ENCODE measurements at regions of chr10 and their contacts with region 1.

Region 1: GRCh38 chr10:102334101-102334500 is 61.4 kb upstream of the NFKB2 start:
- DNase-seq: peak; percentile 42 to 51
- ATAC-seq: peak; percentile 61 to 93 (median 90)
- H3K4me3 ChIP-seq: no peak overlapping the region
- H3K27ac ChIP-seq: peak overlapping the region in 9 of 10 donors; percentile 53 to 79 (median 71)
- H3K4me1 ChIP-seq: peaks cover 0 to 53% (median 33%) of the 10 kb centered on the region in 9 donors
- H3K27me3 ChIP-seq: no peaks in the 10 kb centered on the region
- CTCF ChIP-seq: no peak

Region 2: GRCh38 chr10:102245101-102245931 is 88.8 kb before region 1 on chr10 and contains the start of gene GBF1:
- intact Hi-C with region 1: loop called in 1 of 10 experiments (anchors 5 kb)
- DNase-seq: peak; percentile 88 to 95
- ATAC-seq: peak; percentile 91 to 95 (median 93)
- H3K4me3 ChIP-seq: peak within 1 kb of the TSS; percentile 71 to 97 (median 82)
- H3K27ac ChIP-seq: peak within 1 kb of the TSS; percentile 46 to 95 (median 89)
- H3K4me1 ChIP-seq: peaks cover 7 to 73% (median 60%) of the 10 kb centered on the region in 9 donors
- H3K27me3 ChIP-seq: peaks cover 0 to 23% (median 0%) of the 10 kb centered on the region in 7 donors
- CTCF ChIP-seq: no peak
- total RNA-seq, gene GBF1: 43.6 to 60.5 (median 50.7) TPM

Region 3: DNA sequence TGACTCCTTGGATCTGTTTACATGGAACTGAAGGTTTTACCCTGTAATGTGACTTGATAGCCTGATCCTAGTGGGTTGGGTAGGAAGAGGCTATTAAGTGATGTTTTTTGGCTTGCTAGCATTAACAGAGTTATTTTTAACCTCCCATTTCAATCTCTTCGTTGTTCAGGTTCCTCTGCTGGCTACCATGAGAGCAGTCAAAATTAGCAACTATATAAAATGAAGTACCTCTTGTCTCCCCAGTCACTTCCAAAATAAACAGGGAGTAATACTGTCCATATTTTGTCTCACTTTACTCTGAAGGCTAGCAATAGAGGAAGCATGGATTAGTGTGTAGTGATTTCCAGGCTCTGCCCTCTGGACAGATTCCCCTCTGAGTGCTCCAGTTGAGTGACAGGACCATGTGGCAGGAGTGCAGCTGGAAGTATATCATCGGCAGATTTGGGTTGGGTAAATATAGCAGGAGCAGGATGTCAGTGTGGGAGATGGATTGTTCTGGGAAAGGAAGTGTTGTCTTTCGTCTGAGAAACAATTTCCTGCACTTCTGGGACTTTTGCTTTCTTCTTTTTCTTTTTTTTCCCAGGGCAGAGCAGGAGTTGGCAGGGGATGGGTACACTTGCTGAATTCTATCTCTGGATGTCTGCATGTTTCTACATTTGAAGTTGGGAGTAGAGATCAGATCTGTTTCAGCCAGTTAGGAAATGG is 53.6 kb before region 1 on chr10:
- intact Hi-C with region 1: loop called in 4 of 10 experiments (anchors 1 to 10 kb)
- DNase-seq: peak in 1 of 2 donors; percentile 71
- ATAC-seq: peak; percentile 88 to 96 (median 93)
- H3K4me3 ChIP-seq: peak overlapping the region in 9 of 10 donors; percentile 4 to 42 (median 28)
- H3K27ac ChIP-seq: peak overlapping the region; percentile 46 to 88 (median 82)
- H3K4me1 ChIP-seq: peaks cover 8 to 75% (median 57%) of the 10 kb centered on the region in 9 donors
- H3K27me3 ChIP-seq: no peaks in the 10 kb centered on the region
- CTCF ChIP-seq: no peak

Region 4: DNA sequence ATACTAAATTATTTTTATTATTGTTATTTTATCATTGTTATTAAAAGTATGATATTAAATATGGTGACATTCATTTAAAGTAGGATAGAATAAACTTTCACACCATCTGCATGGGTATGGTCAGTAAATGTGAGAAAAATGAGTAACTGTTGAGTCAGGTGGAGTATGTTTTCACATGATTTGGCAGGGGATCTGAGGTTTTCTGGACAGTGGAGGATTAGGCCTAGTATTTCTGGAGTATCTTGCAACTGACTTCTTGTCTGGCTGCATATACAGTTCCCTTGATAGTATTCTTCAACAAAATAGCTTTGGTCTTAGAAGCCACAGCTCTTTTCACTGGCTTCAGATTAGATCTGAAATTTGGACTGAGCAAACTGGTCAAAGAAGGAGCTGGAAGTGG is 34.2 kb before region 1 on chr10:
- intact Hi-C with region 1: loop called in 1 of 10 experiments (anchors 5 kb)
- DNase-seq: no peak
- ATAC-seq: peak in 5 of 8 donors; percentile 4 to 21 (median 13)
- H3K4me3 ChIP-seq: no peak overlapping the region
- H3K27ac ChIP-seq: peak overlapping the region; percentile 28 to 86 (median 76)
- H3K4me1 ChIP-seq: peaks cover 3 to 46% (median 18%) of the 10 kb centered on the region in 9 donors
- H3K27me3 ChIP-seq: no peaks in the 10 kb centered on the region
- CTCF ChIP-seq: no peak

Region 5: GRCh38 chr10:102352066-102352715 is 18.1 kb after region 1 on chr10:
- intact Hi-C with region 1: no loop called
- DNase-seq: peak; percentile 32 to 53
- ATAC-seq: peak in 7 of 8 donors; percentile 46 to 78 (median 52)
- H3K4me3 ChIP-seq: no peak overlapping the region
- H3K27ac ChIP-seq: no peak overlapping the region
- H3K4me1 ChIP-seq: peaks cover 0 to 9% (median 0%) of the 10 kb centered on the region in 9 donors
- H3K27me3 ChIP-seq: no peaks in the 10 kb centered on the region
- CTCF ChIP-seq: peak; percentile 73 to 95 (median 90)